ENCODE measurements at regions of chr17 and their contacts with region 1.

Region 1: GRCh38 chr17:16353317-16354174 is at the start of gene CENPV:
- DNase-seq: peak in 3 of 5 donors; percentile 36 to 61 (median 43)
- H3K4me3 ChIP-seq: peak within 1 kb of the TSS; percentile 84
- H3K27ac ChIP-seq: peak within 1 kb of the TSS; percentile 3 to 70
- H3K4me1 ChIP-seq: peaks cover 2% of the 10 kb centered on the region
- H3K27me3 ChIP-seq: no peaks in the 10 kb centered on the region
- CTCF ChIP-seq: peak in 1 of 3 donors; percentile 19
- EP300 ChIP-seq: no peak
- POLR2A ChIP-seq: no peak
- total RNA-seq, gene CENPV: 18.8 to 38.9 (median 34.0) TPM

Region 2: GRCh38 chr17:16285957-16286640 is 67.4 kb before region 1 on chr17:
- intact Hi-C with region 1: loop called in 1 of 4 experiments (anchors 10 kb)
- DNase-seq: peak; percentile 80 to 86 (median 86)
- H3K4me3 ChIP-seq: peak overlapping the region; percentile 21
- H3K27ac ChIP-seq: peak overlapping the region; percentile 82 to 93
- H3K4me1 ChIP-seq: peaks cover 16% of the 10 kb centered on the region
- H3K27me3 ChIP-seq: no peaks in the 10 kb centered on the region
- CTCF ChIP-seq: peak in 2 of 3 donors; percentile 26 to 47
- EP300 ChIP-seq: peak; percentile 23
- POLR2A ChIP-seq: peak; percentile 49